GM10248 (cell line): ENCODE measurements at regions of chr6 and their contacts with region 1.

Region 1: GRCh38 chr6:5143634-5144311 is 58.6 kb downstream of the PPP1R3G start:
- DNase-seq: peak; percentile 78
- CTCF ChIP-seq: peak; percentile 86

Region 2: GRCh38 chr6:5007531-5007930 is 136.2 kb before region 1 on chr6:
- CTCF ChIA-PET with region 1: no interaction called
- POLR2A ChIA-PET with region 1: no interaction called
- DNase-seq: no peak
- CTCF ChIP-seq: no peak

Region 3: DNA sequence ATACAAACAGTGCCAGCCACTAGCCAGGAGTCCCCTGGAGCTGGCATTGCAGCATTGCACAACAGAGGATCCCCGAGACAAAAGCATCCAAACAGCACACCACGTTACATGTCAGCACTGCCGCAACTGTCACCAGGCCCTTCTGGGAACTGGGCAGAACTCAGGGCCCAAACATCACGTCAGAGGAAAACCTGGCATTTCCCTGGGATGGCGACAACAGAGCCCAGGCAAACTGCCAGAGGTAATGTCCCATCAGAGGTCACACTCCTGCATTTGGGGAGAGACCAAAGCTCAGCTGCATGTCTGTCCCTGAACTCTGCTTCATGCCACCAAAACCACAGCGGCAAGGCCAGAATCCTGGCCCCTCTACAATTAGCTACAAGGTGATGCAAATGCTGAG is 22.3 kb before region 1 on chr6:
- CTCF ChIA-PET with region 1: interaction called, 10 read pairs
- POLR2A ChIA-PET with region 1: no interaction called
- DNase-seq: no peak
- CTCF ChIP-seq: no peak

Region 4: DNA sequence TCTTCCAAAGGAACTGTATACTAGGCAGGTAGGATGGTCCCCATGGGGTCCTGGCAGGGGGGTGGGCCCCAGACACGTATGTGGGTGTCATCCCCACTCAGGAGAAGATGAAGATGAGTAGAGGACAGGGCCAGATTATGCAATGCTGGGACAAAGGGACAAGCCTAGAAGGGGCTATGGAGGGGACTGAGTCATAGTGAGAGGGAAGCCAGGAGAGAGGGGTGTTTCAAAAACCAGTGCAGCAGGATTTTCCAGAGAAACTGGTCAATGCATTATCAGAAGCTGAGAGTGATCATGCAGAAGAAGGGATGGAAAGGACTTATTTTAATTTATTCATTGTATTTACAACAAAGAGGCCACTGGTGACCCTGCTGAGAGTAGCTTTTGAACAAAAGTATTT is 15.4 kb after region 1 on chr6:
- CTCF ChIA-PET with region 1: interaction called, 16 read pairs
- POLR2A ChIA-PET with region 1: no interaction called
- DNase-seq: no peak
- CTCF ChIP-seq: no peak

Region 5: GRCh38 chr6:5174244-5174643 is 30.5 kb after region 1 on chr6:
- CTCF ChIA-PET with region 1: interaction called, 27 read pairs
- POLR2A ChIA-PET with region 1: no interaction called
- DNase-seq: peak; percentile 62
- CTCF ChIP-seq: no peak

Region 6: GRCh38 chr6:5266423-5266822 is 122.7 kb after region 1 on chr6:
- CTCF ChIA-PET with region 1: interaction called, 16 read pairs
- POLR2A ChIA-PET with region 1: no interaction called
- DNase-seq: no peak
- CTCF ChIP-seq: no peak

Region 7: GRCh38 chr6:5379647-5380242 is 236.0 kb after region 1 on chr6:
- CTCF ChIA-PET with region 1: interaction called, 21 read pairs
- POLR2A ChIA-PET with region 1: no interaction called
- DNase-seq: peak; percentile 54
- CTCF ChIP-seq: peak; percentile 56

Region 8: GRCh38 chr6:5401845-5402738 is 258.3 kb after region 1 on chr6:
- CTCF ChIA-PET with region 1: interaction called, 14 read pairs
- POLR2A ChIA-PET with region 1: no interaction called
- DNase-seq: no peak
- CTCF ChIP-seq: peak; percentile 48